PC-3 (cell line): ENCODE measurements at regions of chr4 and their contacts with region 1.

Region 1: GRCh38 chr4:6327041-6327917 is 57.6 kb downstream of the WFS1 start:
- DNase-seq: peak; percentile 69
- ATAC-seq: peak; percentile 73
- H3K4me3 ChIP-seq: no peak overlapping the region
- H3K27ac ChIP-seq: no peak overlapping the region
- H3K4me1 ChIP-seq: peaks cover 18% of the 10 kb centered on the region
- H3K27me3 ChIP-seq: no peaks in the 10 kb centered on the region
- CTCF ChIP-seq: peak; percentile 77

Region 2: GRCh38 chr4:6250235-6250983 is 76.9 kb before region 1 on chr4:
- CTCF ChIA-PET with region 1: interaction called, 10 read pairs
- POLR2A ChIA-PET with region 1: no interaction called
- intact Hi-C with region 1: loop called (anchors 1 kb)
- DNase-seq: peak; percentile 85
- ATAC-seq: peak; percentile 70
- H3K4me3 ChIP-seq: peak overlapping the region; percentile 16; the same call in 1 of the 2 replicates
- H3K27ac ChIP-seq: no peak overlapping the region
- H3K4me1 ChIP-seq: no peaks in the 10 kb centered on the region
- H3K27me3 ChIP-seq: no peaks in the 10 kb centered on the region
- CTCF ChIP-seq: peak; percentile 78

Region 3: GRCh38 chr4:6381571-6382120 is 54.4 kb after region 1 on chr4:
- CTCF ChIA-PET with region 1: no interaction called
- POLR2A ChIA-PET with region 1: no interaction called
- intact Hi-C with region 1: loop called (anchors 1 kb)
- DNase-seq: no peak
- ATAC-seq: no peak
- H3K4me3 ChIP-seq: no peak overlapping the region
- H3K27ac ChIP-seq: no peak overlapping the region
- H3K4me1 ChIP-seq: no peaks in the 10 kb centered on the region
- H3K27me3 ChIP-seq: no peaks in the 10 kb centered on the region
- CTCF ChIP-seq: no peak